Activated CD4-positive, alpha-beta memory T cell treated with anti-CD3 and anti-CD28 coated beads for 36 hours (primary cell): ENCODE measurements at regions of chr3 and their contacts with region 1.

Region 1: GRCh38 chr3:46496741-46497554 is 828 bp upstream of the RTP3 start:
- DNase-seq: peak; percentile 62
- H3K4me3 Mint-ChIP-seq: no peak overlapping the region
- H3K27ac Mint-ChIP-seq: no peak overlapping the region
- H3K4me1 Mint-ChIP-seq: peaks cover 3% of the 10 kb centered on the region
- H3K27me3 Mint-ChIP-seq: no peaks in the 10 kb centered on the region

Region 2: GRCh38 chr3:46558184-46559043 is 61.5 kb after region 1 on chr3:
- CTCF ChIA-PET with region 1: interaction called, 168 read pairs
- POLR2A ChIA-PET with region 1: no interaction called
- intact Hi-C with region 1: loop called (anchors 1 kb)
- DNase-seq: peak; percentile 78
- H3K4me3 Mint-ChIP-seq: peak overlapping the region; percentile 71
- H3K27ac Mint-ChIP-seq: no peak overlapping the region
- H3K4me1 Mint-ChIP-seq: peaks cover 11% of the 10 kb centered on the region
- H3K27me3 Mint-ChIP-seq: peaks cover 1% of the 10 kb centered on the region